Activated CD4-positive, alpha-beta T cell treated with anti-CD3 and anti-CD28 coated beads, Interleukin-2, amount 10 ng/mL, durations not matched to agents 24 days and 14 days (primary cell): ENCODE measurements at regions of chr6 and their contacts with region 1.

Region 1: DNA sequence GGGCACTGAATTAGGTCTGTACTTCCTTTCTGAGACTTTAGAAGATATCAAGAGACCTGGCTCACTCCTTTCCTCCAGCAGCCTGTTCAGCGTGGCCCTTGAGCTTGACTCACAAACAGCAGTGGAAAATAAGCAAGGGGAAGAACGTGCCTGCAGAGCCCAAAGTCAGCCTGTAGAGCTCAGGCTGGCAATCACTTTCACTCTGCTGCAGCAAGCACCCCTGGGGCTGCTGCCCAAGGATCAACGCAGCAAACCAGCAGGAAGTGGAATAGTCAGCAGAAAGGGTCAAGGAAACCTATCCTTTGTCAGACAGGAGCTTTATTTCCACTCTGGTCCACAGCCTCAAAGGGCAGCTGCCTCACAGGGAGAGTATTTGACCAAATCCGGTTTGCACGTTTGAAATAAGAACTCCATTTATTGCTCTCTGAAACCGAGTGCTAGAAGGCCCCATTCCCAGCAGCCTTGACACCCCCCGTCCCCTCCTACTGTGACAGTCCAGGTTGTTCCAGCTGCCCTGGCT is 77.4 kb downstream of the PRDM1 start:
- DNase-seq: peak; percentile 88
- H3K4me3 Mint-ChIP-seq: peak overlapping the region; percentile 71
- H3K27ac Mint-ChIP-seq: peak overlapping the region; percentile 92
- H3K4me1 Mint-ChIP-seq: peaks cover 53% of the 10 kb centered on the region
- H3K27me3 Mint-ChIP-seq: no peaks in the 10 kb centered on the region

Region 2: GRCh38 chr6:105810105-105810921 is 353.2 kb before region 1 on chr6:
- intact Hi-C with region 1: loop called (anchors 1 kb)
- DNase-seq: peak; percentile 89
- H3K4me3 Mint-ChIP-seq: peak overlapping the region; percentile 45
- H3K27ac Mint-ChIP-seq: peak overlapping the region; percentile 71
- H3K4me1 Mint-ChIP-seq: peaks cover 67% of the 10 kb centered on the region
- H3K27me3 Mint-ChIP-seq: no peaks in the 10 kb centered on the region

Region 3: GRCh38 chr6:106125925-106126435 is 37.5 kb before region 1 on chr6:
- intact Hi-C with region 1: loop called (anchors 1 kb)
- DNase-seq: peak; percentile 76
- H3K4me3 Mint-ChIP-seq: peak overlapping the region; percentile 55
- H3K27ac Mint-ChIP-seq: peak overlapping the region; percentile 89
- H3K4me1 Mint-ChIP-seq: peaks cover 42% of the 10 kb centered on the region
- H3K27me3 Mint-ChIP-seq: peaks cover 2% of the 10 kb centered on the region

Region 4: GRCh38 chr6:106149472-106150069 is 13.9 kb before region 1 on chr6:
- intact Hi-C with region 1: loop called (anchors 2 kb)
- DNase-seq: peak; percentile 81
- H3K4me3 Mint-ChIP-seq: peak overlapping the region; percentile 2
- H3K27ac Mint-ChIP-seq: peak overlapping the region; percentile 21
- H3K4me1 Mint-ChIP-seq: peaks cover 50% of the 10 kb centered on the region
- H3K27me3 Mint-ChIP-seq: no peaks in the 10 kb centered on the region

Region 5: DNA sequence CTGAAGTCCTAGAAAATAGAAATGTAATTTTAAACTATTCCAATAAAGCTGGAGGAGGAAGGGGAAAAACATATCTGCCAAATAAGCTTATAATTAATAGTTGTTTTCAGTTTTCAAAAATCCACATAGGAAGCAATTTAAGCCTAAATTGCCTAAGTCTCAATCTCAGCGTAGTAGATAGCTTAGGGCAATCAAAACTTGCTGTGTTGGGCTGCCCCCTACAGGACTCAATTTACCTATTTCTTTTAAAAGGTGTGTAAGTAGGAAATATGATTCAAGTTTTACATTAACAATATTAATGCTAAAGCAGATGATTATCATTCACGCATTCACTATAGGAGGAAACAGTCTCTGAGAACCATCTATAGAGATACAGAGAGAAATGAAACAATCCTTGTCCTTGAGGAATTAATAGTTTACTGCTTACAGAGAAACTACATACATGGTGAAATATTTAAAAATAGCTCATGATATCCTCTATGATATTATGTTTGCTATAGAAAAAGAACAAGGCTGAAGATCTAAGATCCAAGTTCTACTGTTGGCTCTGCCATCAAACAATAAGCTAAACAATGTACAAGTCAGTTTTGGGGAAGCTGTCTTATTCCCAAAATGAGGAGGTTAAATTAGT is 59.9 kb after region 1 on chr6:
- intact Hi-C with region 1: loop called (anchors 2 kb)
- DNase-seq: peak; percentile 91
- H3K4me3 Mint-ChIP-seq: no peak overlapping the region
- H3K27ac Mint-ChIP-seq: no peak overlapping the region
- H3K4me1 Mint-ChIP-seq: peaks cover 32% of the 10 kb centered on the region
- H3K27me3 Mint-ChIP-seq: no peaks in the 10 kb centered on the region

Region 6: GRCh38 chr6:106411643-106412200 is 248.2 kb after region 1 on chr6:
- intact Hi-C with region 1: no loop called
- DNase-seq: no peak
- H3K4me3 Mint-ChIP-seq: no peak overlapping the region
- H3K27ac Mint-ChIP-seq: no peak overlapping the region
- H3K4me1 Mint-ChIP-seq: no peaks in the 10 kb centered on the region
- H3K27me3 Mint-ChIP-seq: peaks cover 58% of the 10 kb centered on the region